ENCODE measurements at regions of chr9 and their contacts with region 1.

Region 1: GRCh38 chr9:114487607-114488300 is 17.5 kb downstream of the WHRN start:
- DNase-seq: peak; percentile 69
- H3K4me3 Mint-ChIP-seq: no peak overlapping the region
- H3K27ac Mint-ChIP-seq: no peak overlapping the region
- H3K4me1 Mint-ChIP-seq: peaks cover 26% of the 10 kb centered on the region
- H3K27me3 Mint-ChIP-seq: peaks cover 1% of the 10 kb centered on the region

Region 2: DNA sequence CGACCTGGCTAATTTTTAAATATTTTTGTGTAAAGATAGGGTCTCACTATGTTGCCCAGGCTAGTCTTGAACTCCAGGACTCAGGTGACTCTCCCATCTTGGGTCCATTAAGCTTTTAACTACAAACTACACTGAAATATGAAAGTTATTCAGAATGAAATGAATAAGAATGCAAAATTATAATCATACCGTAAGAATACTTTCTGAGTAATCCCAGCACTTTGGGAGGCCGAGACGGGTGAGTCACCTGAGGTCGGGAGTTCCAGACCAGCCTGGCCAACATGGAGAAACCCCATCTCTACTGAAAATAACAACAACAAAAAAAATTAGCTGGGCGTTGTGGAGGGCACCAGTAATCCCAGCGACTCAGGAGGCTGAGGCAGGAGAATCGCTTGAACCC is 166.0 kb before region 1 on chr9:
- CTCF ChIA-PET with region 1: no interaction called
- POLR2A ChIA-PET with region 1: no interaction called
- intact Hi-C with region 1: loop called (anchors 5 kb)
- DNase-seq: peak; percentile 83
- H3K4me3 Mint-ChIP-seq: peak overlapping the region; percentile 16
- H3K27ac Mint-ChIP-seq: peak overlapping the region; percentile 62
- H3K4me1 Mint-ChIP-seq: peaks cover 13% of the 10 kb centered on the region
- H3K27me3 Mint-ChIP-seq: peaks cover 5% of the 10 kb centered on the region

Region 3: GRCh38 chr9:114348906-114349482 is 138.8 kb before region 1 on chr9:
- CTCF ChIA-PET with region 1: no interaction called
- POLR2A ChIA-PET with region 1: no interaction called
- intact Hi-C with region 1: loop called (anchors 10 kb)
- DNase-seq: peak; percentile 97
- H3K4me3 Mint-ChIP-seq: peak overlapping the region; percentile 40
- H3K27ac Mint-ChIP-seq: peak overlapping the region; percentile 100
- H3K4me1 Mint-ChIP-seq: peaks cover 46% of the 10 kb centered on the region
- H3K27me3 Mint-ChIP-seq: no peaks in the 10 kb centered on the region

Region 4: GRCh38 chr9:114371973-114372917 is 115.5 kb before region 1 on chr9:
- CTCF ChIA-PET with region 1: no interaction called
- POLR2A ChIA-PET with region 1: no interaction called
- intact Hi-C with region 1: no loop called
- DNase-seq: peak; percentile 61
- H3K4me3 Mint-ChIP-seq: peak overlapping the region; percentile 68
- H3K27ac Mint-ChIP-seq: peak overlapping the region; percentile 98
- H3K4me1 Mint-ChIP-seq: peaks cover 85% of the 10 kb centered on the region
- H3K27me3 Mint-ChIP-seq: no peaks in the 10 kb centered on the region

Region 5: DNA sequence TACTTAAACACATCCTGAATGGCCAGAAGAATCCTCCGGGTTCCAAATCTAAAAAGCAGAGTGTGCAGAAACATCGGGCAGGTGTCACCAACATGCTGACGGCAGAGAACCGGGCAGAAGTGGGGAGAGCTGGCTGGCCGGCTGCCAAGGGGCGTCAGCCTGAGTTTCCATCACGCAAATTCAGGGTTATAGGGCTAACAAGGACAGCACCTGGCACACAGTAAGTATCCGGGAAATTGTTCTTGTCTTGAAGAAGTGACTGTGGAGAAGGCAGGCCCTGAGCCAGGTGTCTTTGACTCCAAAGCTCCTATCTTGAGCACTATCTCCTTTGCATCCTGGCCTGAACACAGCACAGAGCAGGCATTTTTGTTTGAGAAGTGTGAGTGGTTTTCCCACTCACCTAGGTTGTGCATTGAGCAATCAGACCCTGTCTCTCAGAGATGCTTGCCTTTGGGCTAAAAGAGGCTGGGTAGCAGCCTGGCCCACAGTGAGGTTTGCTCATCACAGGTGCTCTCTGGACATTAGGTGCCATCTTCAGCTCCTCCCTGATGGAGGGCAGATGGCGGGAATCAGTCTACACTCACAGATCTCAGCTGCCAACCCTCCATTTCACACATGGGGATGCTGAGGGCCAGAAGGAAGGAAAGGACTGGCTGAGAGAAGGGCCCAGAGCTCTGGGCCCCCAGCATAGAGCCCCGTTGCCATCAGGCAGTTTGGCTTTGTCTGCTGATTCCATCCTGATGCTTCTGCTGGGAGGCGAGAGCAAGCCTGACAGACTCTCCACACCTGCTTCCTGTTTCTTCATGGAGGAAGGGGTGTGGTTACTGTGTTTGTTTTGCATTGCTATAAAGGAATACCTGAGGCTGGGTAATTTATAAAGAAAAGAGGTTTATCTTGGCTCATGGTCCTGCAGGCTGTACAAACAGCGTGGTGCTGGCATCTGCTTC is 35.3 kb before region 1 on chr9:
- CTCF ChIA-PET with region 1: no interaction called
- POLR2A ChIA-PET with region 1: no interaction called
- intact Hi-C with region 1: loop called (anchors 5 kb)
- DNase-seq: peak; percentile 59
- H3K4me3 Mint-ChIP-seq: no peak overlapping the region
- H3K27ac Mint-ChIP-seq: peak overlapping the region; percentile 64
- H3K4me1 Mint-ChIP-seq: peaks cover 27% of the 10 kb centered on the region
- H3K27me3 Mint-ChIP-seq: no peaks in the 10 kb centered on the region

Region 6: DNA sequence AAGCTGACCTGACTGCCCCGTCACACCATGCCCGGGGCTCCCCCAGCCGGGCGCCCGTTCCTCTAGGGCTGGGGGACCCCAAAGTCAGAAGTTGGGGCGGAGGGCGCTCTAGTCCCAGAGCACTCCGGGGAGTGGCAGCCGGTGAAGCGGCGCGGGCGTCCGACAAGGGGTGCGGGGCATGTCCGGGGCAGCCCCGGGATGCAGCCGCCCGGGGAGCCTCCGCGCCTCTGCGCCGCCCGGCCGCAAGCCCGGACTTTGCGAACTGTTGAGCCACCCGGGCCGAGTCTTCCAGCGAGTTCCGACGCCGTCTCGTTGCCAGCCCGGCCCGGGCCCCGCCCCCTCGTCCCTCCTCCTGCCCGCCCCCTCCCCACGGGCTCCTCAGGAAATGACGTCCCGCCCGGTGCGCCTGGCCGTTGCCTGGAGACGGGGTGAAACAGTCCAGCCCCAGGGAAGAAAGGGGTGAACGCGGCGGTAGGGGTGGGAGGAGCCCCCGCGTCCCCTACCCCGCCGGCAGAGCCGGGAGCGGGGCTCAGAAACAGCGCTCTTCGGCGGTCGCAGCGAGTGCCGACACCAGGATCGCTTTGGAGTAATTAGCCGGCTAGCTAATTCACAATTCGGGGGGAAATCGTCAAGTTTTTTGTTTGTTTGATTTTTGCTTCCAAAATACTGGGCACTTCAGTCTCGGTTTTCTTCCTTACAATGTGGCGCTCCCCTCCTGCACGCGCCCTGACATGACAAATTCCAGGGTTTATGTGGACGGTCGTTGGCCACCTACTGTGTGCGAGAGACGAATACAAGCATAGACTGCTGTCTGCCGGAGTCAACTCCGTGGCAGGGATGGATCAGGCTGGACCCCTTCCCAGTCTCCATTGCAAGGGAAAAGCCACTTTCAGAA is 17.7 kb after region 1 on chr9 and contains the start of gene WHRN:
- CTCF ChIA-PET with region 1: interaction called, 109 read pairs
- POLR2A ChIA-PET with region 1: interaction called, 3 read pairs
- intact Hi-C with region 1: loop called (anchors 1 kb)
- DNase-seq: peak; percentile 93
- H3K4me3 Mint-ChIP-seq: peak within 1 kb of the TSS; percentile 76
- H3K27ac Mint-ChIP-seq: peak within 1 kb of the TSS; percentile 42
- H3K4me1 Mint-ChIP-seq: peaks cover 24% of the 10 kb centered on the region
- H3K27me3 Mint-ChIP-seq: peaks cover 17% of the 10 kb centered on the region
- total RNA-seq, gene WHRN: 2.8 to 4.4 TPM

Region 7: DNA sequence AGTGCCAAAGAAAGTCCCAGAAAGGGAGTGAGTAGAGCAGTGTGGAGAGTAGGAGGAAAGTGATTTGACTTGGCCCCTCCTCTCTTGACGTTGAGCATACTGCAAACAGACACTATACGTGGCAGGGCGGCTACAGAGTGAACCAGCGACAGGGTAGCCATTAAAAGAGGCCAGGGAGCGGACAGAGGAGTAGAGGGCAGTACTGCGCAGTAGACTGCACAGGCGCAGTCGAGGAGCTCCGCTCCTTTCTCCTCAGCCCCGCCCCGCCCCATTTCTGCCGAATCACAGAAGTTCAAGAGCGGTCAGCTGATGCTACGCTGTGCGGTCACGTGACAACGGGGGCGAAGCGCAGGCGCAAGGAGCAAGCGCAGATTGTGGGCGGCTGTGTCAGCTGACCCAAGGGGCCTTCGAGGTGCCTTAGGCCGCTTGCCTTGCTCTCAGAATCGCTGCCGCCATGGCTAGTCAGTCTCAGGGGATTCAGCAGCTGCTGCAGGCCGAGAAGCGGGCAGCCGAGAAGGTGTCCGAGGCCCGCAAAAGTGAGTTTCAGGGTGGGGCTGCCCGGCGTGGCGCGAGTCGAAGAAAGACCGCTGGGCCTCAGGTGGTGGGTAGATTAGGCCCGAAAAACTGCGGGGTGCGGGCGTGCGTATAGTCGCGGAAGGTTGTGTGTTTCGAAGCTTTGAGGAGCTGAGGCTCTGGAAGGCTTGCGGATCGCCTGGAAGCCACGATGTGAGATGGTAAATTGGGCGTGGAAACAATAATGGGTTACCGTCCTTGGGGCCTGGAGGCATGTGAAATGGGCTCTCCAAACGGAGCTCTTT is 99.8 kb after region 1 on chr9 and contains the start of gene ATP6V1G1:
- CTCF ChIA-PET with region 1: interaction called, 13 read pairs
- POLR2A ChIA-PET with region 1: interaction called, 8 read pairs
- intact Hi-C with region 1: loop called (anchors 1 kb)
- DNase-seq: peak; percentile 100
- H3K4me3 Mint-ChIP-seq: peak within 1 kb of the TSS; percentile 99
- H3K27ac Mint-ChIP-seq: peak within 1 kb of the TSS; percentile 97
- H3K4me1 Mint-ChIP-seq: peaks cover 40% of the 10 kb centered on the region
- H3K27me3 Mint-ChIP-seq: no peaks in the 10 kb centered on the region
- total RNA-seq, gene ATP6V1G1: 32.1 to 38.9 TPM

Region 8: GRCh38 chr9:114779352-114779845 is 291.6 kb after region 1 on chr9:
- CTCF ChIA-PET with region 1: no interaction called
- POLR2A ChIA-PET with region 1: no interaction called
- intact Hi-C with region 1: no loop called
- DNase-seq: no peak
- H3K4me3 Mint-ChIP-seq: no peak overlapping the region
- H3K27ac Mint-ChIP-seq: no peak overlapping the region
- H3K4me1 Mint-ChIP-seq: peaks cover 22% of the 10 kb centered on the region
- H3K27me3 Mint-ChIP-seq: peaks cover 2% of the 10 kb centered on the region

Region 9: GRCh38 chr9:115204904-115205453 is 717.2 kb after region 1 on chr9:
- CTCF ChIA-PET with region 1: no interaction called
- POLR2A ChIA-PET with region 1: no interaction called
- intact Hi-C with region 1: loop called (anchors 10 kb)
- DNase-seq: no peak
- H3K4me3 Mint-ChIP-seq: no peak overlapping the region
- H3K27ac Mint-ChIP-seq: no peak overlapping the region
- H3K4me1 Mint-ChIP-seq: peaks cover 27% of the 10 kb centered on the region
- H3K27me3 Mint-ChIP-seq: peaks cover 46% of the 10 kb centered on the region